Left cardiac atrium (tissue), 4 donors: ENCODE measurements at regions of chr19 and their contacts with region 1.

Region 1: DNA sequence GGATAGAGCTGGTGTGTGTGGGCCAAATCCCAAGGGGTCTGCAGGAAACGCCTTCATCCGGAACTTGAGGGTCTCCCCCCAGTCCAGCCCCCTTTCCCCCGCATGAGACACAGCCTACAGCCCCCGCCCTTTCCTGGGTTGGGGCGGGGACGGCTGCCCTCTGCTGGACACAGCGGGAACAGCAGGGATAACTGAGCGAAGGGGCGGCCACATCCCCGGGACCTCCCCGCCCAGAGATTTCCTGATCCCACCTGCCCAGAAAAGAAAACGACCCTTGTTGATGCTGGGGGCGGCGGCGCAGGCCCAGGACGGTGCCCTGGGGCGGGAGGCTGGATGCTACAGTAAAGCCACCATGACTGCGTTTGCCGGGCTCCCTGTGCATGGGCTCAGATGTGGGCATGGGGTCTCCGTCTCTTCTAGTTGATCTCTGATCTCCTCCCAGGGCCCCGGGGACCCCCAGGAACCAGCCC is 14.2 kb downstream of the ONECUT3 start:
- DNase-seq: no peak
- ATAC-seq: peak; percentile 69 to 73

Region 2: DNA sequence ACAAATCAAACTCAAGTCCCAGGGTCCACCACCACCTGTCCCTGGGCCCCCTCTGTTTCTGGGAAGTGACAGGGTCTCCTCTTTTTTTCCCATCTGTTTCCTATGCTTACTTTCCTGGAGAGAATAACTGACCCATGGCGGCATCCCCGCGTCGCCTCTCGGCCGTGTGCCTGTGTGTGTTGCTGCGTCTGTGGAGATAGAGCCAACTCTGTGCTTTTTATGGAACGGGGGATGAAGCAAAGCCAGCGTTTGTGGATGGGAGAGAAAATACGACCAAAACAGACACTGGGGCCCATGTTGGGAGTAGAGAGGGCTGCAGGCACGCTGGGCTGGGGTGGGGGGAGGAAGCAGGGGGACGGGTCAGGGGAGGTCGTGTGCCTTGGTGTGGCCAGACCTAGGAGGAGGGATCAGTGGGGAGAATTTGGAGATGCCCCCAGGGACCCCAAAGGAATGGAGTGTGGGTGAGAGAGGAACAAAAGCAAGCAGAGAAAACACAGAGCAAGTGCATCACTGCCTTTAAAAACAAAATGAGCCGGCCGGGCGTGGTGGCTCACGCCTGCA is 227.1 kb before region 1 on chr19:
- intact Hi-C with region 1: loop called (anchors 5 to 10 kb)
- DNase-seq: no peak
- ATAC-seq: peak; percentile 48 to 79

Region 3: GRCh38 chr19:1652471-1653299 is 114.8 kb before region 1 on chr19 and contains the start of gene TCF3:
- intact Hi-C with region 1: no loop called
- DNase-seq: peak; percentile 98
- ATAC-seq: peak; percentile 99
- total RNA-seq, gene TCF3: 24.1 to 25.8 TPM

Region 4: GRCh38 chr19:2261438-2262172 is 494.1 kb after region 1 on chr19:
- intact Hi-C with region 1: no loop called
- DNase-seq: no peak
- ATAC-seq: no peak